ENCODE measurements at regions of chr1 and their contacts with region 1.

Region 1: DNA sequence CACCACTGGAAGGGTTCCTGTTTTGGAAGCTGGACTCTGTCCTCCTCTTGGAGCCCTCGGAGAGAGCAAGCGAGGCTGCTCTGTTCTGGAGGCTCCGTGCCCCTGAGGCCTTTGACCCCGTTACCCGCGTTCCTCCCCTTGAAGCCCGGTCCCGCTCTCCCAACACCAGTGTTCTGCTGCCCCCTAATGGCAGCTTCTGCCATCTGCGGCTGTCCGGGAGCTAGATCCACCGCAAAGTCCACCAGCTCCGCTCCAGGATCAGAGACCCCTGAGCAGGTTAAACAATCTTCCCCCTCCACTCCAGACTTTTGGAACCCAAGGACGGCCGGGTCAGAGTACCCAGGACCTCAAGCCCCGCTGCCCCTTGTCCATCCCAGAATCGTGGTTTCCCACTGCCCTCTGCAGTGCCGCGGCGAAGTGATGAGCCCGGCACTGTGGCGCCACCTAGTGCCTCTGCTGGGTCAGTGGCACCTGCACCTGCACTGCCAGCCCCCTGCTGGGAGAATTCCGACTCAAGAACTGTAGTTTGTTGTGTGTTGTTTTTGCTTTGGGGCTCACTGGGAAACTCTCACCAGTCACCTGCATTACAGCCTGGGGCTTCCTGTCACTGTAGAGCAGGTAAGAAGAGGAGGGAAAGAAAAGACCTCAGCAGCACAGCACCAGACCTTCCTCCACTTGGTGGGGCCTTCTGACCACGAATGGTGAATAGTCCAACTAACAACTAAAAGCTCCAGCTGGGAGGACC is 63.5 kb upstream of the NFASC start:
- DNase-seq: peak; percentile 62 to 91 (median 79)
- ATAC-seq: peak; percentile 99
- H3K4me3 ChIP-seq: peak overlapping the region; percentile 21 to 34
- H3K27ac ChIP-seq: no peak overlapping the region
- H3K4me1 ChIP-seq: peaks cover 0 to 6% of the 10 kb centered on the region in 2 donors
- H3K27me3 ChIP-seq: peaks cover 0 to 4% of the 10 kb centered on the region in 2 donors
- CTCF ChIP-seq: peak; percentile 92 to 95

Region 2: GRCh38 chr1:204487256-204487615 is 319.9 kb before region 1 on chr1:
- intact Hi-C with region 1: no loop called
- DNase-seq: no peak
- ATAC-seq: no peak
- H3K4me3 ChIP-seq: no peak overlapping the region
- H3K27ac ChIP-seq: no peak overlapping the region
- H3K4me1 ChIP-seq: peaks cover under 1 to 15% of the 10 kb centered on the region in 2 donors
- H3K27me3 ChIP-seq: no peaks in the 10 kb centered on the region
- CTCF ChIP-seq: no peak

Region 3: DNA sequence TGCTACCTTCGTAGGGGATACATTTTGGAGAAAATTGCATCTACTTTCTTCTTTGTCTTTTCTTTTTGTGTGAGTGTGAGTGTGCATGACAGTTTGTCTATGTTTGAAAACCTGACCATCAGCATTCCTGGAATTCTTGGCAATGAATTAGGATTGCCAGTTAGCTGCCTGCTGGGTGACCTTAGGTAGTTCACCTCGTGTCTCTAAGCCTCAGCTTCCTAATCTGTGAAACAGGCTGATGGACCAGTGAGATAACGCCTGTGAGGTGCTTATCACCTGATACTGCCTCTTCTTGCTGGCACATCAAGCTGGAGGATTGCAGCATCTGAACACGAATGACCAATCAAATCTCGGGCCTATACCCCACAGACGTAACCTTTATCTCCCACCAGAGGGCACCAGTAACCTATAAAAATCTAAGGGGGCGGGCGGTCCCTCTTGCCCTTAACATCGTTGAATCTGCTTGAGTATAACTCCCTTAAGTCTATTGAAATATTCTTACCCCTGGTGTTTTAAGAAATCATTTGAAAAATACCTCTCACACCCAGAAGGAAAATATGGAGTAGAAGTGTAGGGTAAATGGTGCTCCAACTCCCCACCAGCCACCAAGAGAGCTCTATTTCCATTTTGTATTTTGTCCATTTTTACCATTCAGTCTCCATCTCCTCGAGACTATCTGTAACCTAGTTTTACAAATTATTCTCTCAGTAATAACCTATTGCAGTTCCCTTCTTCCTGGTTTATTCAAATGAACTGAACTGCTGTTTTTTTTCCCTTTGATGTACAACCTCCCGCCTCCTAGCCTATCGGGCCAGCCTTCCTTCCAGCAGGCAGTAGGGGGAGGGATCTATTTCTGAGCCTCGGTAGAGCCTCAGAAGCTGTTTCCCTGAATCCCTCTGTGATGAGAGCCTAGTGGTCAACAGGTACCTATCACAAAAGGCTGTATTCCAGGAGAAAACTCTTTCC is 241.2 kb before region 1 on chr1:
- intact Hi-C with region 1: loop called in 1 of 2 experiments (anchors 5 kb)
- DNase-seq: peak in 2 of 4 donors; percentile 42 to 69
- ATAC-seq: peak; percentile 89
- H3K4me3 ChIP-seq: no peak overlapping the region
- H3K27ac ChIP-seq: no peak overlapping the region
- H3K4me1 ChIP-seq: no peaks in the 10 kb centered on the region
- H3K27me3 ChIP-seq: no peaks in the 10 kb centered on the region
- CTCF ChIP-seq: peak; percentile 48 to 59

Region 4: GRCh38 chr1:204846546-204847167 is 39.5 kb after region 1 on chr1:
- intact Hi-C with region 1: no loop called
- DNase-seq: no peak
- ATAC-seq: no peak
- H3K4me3 ChIP-seq: no peak overlapping the region
- H3K27ac ChIP-seq: no peak overlapping the region
- H3K4me1 ChIP-seq: no peaks in the 10 kb centered on the region
- H3K27me3 ChIP-seq: peaks cover 0 to 7% of the 10 kb centered on the region in 2 donors
- CTCF ChIP-seq: no peak

Region 5: GRCh38 chr1:204941421-204942338 is 134.6 kb after region 1 on chr1:
- intact Hi-C with region 1: loop called in 1 of 2 experiments (anchors 10 kb)
- DNase-seq: peak; percentile 25 to 85 (median 50)
- ATAC-seq: peak; percentile 89
- H3K4me3 ChIP-seq: no peak overlapping the region
- H3K27ac ChIP-seq: no peak overlapping the region
- H3K4me1 ChIP-seq: no peaks in the 10 kb centered on the region
- H3K27me3 ChIP-seq: peaks cover 0 to 10% of the 10 kb centered on the region in 2 donors
- CTCF ChIP-seq: peak; percentile 67 to 92

Measured in left lung (tissue), 14 donors.